ENCODE measurements at regions of chr11 and their contacts with region 1.

Region 1: DNA sequence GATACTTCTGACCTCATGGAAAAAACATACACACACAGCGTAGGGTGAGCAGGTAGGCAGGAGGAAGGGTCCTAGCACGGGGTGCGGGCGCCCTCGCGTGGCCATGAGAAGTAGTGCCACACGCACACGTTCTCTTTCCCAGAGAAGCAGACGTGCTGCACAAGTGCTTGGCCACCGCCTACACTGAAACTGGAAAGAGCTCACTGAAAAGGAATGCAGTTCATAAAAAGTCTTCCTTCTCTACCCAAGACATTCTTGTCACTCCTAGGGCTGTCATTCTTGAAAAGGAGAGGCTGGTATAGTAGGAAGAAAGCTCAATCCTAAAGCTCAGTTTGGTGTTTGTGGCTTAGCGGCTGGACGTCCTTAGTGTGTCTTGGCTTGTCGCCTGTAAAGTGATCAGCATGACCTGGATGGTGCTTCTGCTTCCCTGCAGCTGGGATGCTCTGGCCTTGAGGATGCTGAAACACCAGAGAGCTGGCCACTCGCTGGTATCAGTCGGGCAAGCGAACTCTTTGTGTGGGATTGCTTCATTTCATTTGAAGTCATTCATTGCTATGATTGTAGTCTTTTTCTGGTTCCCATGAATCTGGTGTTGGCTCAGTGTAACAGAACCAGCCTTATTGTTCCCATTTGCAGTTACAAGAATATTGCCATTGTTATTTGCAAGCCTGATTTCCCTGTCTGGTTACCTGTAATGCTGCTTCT is 303.8 kb downstream of the NTM start:
- DNase-seq: no peak
- ATAC-seq: peak; percentile 95
- H3K4me3 ChIP-seq: no peak overlapping the region
- H3K27ac ChIP-seq: no peak overlapping the region
- H3K4me1 ChIP-seq: no peaks in the 10 kb centered on the region
- H3K27me3 ChIP-seq: no peaks in the 10 kb centered on the region
- CTCF ChIP-seq: peak; percentile 96 to 97 (median 97)
- EP300 ChIP-seq: no peak
- POLR2A ChIP-seq: no peak
- RAD21 ChIP-seq: peak; percentile 91

Region 2: DNA sequence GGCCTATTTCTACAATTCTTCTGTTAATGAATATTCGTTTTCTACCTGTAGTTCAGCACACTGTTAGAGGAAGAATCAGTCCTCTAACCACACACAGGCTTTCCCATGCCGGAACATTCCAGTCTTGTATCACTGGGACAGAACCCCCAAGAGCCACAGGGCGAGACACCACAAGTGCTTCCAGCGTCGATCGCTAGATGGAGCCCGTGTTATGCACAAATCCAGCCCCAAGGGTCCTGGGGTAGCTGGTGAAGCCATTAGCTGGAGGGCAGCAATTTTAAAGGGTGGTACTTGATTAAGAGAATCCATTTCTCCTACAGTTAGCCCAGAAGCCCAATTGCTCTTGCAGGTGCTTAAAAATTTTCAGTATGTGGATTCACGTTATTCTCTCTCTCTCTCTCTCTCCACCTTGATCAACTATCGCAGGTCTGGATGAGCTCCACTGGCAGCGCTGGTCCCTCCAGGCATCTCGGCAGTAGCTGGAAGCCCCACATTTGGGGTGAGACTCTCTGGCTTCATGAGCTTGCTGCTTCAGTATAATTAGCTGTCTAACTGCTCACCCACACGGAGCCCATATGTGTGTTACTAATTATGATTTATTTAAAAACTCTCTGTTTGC is 609.7 kb before region 1 on chr11:
- CTCF ChIA-PET with region 1: interaction called, 25 read pairs
- POLR2A ChIA-PET with region 1: no interaction called
- RAD21 ChIA-PET with region 1: interaction called, 19 read pairs
- SMC1A ChIA-PET with region 1: interaction called, 6 read pairs
- in situ Hi-C with region 1: no loop called
- intact Hi-C with region 1: loop called (anchors 1 kb)
- DNase-seq: peak; percentile 5
- ATAC-seq: peak; percentile 94
- H3K4me3 ChIP-seq: no peak overlapping the region
- H3K27ac ChIP-seq: no peak overlapping the region
- H3K4me1 ChIP-seq: no peaks in the 10 kb centered on the region
- H3K27me3 ChIP-seq: peaks cover 0 to 6% of the 10 kb centered on the region in 2 experiments; a peak in 1 of 4 replicates
- CTCF ChIP-seq: peak; percentile 86 to 88 (median 87)
- EP300 ChIP-seq: no peak
- POLR2A ChIP-seq: no peak
- RAD21 ChIP-seq: peak; percentile 93

Region 3: GRCh38 chr11:131246663-131247062 is 427.5 kb before region 1 on chr11:
- CTCF ChIA-PET with region 1: interaction called, 5 read pairs
- POLR2A ChIA-PET with region 1: no interaction called
- RAD21 ChIA-PET with region 1: interaction called, 4 read pairs
- SMC1A ChIA-PET with region 1: no interaction called
- in situ Hi-C with region 1: no loop called
- intact Hi-C with region 1: loop called (anchors 10 kb)
- DNase-seq: no peak
- ATAC-seq: peak; percentile 66
- H3K4me3 ChIP-seq: no peak overlapping the region
- H3K27ac ChIP-seq: no peak overlapping the region
- H3K4me1 ChIP-seq: no peaks in the 10 kb centered on the region
- H3K27me3 ChIP-seq: no peaks in the 10 kb centered on the region; a peak in 2 of 4 replicates
- CTCF ChIP-seq: peak; percentile 42 to 59 (median 48); a peak in 5 of 6 replicates
- EP300 ChIP-seq: no peak
- POLR2A ChIP-seq: no peak
- RAD21 ChIP-seq: peak; percentile 33

Region 4: GRCh38 chr11:131579932-131580387 is 94.2 kb before region 1 on chr11:
- CTCF ChIA-PET with region 1: interaction called, 46 read pairs
- POLR2A ChIA-PET with region 1: no interaction called
- RAD21 ChIA-PET with region 1: interaction called, 12 read pairs
- SMC1A ChIA-PET with region 1: interaction called, 8 read pairs
- in situ Hi-C with region 1: loop called (anchors 5 kb)
- intact Hi-C with region 1: loop called (anchors 1 kb)
- DNase-seq: no peak
- ATAC-seq: peak; percentile 93
- H3K4me3 ChIP-seq: no peak overlapping the region
- H3K27ac ChIP-seq: no peak overlapping the region
- H3K4me1 ChIP-seq: no peaks in the 10 kb centered on the region
- H3K27me3 ChIP-seq: peaks cover 4 to 13% of the 10 kb centered on the region in 2 experiments; a peak in 3 of 4 replicates
- CTCF ChIP-seq: peak; percentile 53 to 62 (median 56)
- EP300 ChIP-seq: no peak
- POLR2A ChIP-seq: no peak
- RAD21 ChIP-seq: peak; percentile 56

Region 5: DNA sequence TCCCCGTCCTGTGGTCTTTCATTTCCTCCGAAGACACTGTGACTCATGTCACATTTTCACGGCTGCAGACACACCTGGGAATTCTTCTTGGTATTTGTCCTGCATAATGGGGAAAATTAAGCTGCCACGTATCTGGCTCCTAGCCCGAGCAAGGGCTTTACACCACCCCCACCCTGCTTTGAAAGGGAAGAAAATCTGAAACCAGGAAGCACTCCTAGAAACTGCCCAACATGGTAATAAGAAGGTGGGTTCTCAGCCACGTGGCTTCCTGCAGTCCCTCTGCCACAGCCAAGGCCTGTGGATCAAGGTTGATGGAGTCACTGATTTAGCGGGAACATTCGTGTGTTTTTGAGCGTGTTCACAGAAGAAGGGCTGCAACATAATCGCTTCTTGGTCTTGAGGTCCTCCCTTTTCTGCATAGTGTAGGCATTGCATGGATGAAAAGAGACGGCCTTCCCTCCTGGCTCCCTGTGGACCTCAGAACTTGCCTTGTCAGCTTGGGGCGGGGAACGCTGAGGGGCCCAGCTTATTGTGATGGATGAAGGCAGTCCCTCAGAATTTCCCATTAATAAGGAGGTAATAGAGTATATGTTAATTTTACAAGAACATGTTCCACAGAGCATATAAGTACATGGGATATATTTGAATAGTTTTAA is 11.8 kb before region 1 on chr11:
- CTCF ChIA-PET with region 1: interaction called, 17 read pairs
- POLR2A ChIA-PET with region 1: no interaction called
- RAD21 ChIA-PET with region 1: no interaction called
- SMC1A ChIA-PET with region 1: no interaction called
- in situ Hi-C with region 1: no loop called
- intact Hi-C with region 1: no loop called
- DNase-seq: no peak
- ATAC-seq: no peak
- H3K4me3 ChIP-seq: no peak overlapping the region
- H3K27ac ChIP-seq: no peak overlapping the region
- H3K4me1 ChIP-seq: peaks cover 8% of the 10 kb centered on the region; the same call in 1 of the 2 replicates
- H3K27me3 ChIP-seq: peaks cover 0 to 6% of the 10 kb centered on the region in 2 experiments; a peak in 1 of 4 replicates
- CTCF ChIP-seq: no peak
- EP300 ChIP-seq: no peak
- POLR2A ChIP-seq: no peak
- RAD21 ChIP-seq: no peak

Region 6: GRCh38 chr11:131723088-131723487 is 48.9 kb after region 1 on chr11:
- CTCF ChIA-PET with region 1: no interaction called
- POLR2A ChIA-PET with region 1: no interaction called
- RAD21 ChIA-PET with region 1: no interaction called
- SMC1A ChIA-PET with region 1: no interaction called
- in situ Hi-C with region 1: no loop called
- intact Hi-C with region 1: no loop called
- DNase-seq: no peak
- ATAC-seq: no peak
- H3K4me3 ChIP-seq: no peak overlapping the region
- H3K27ac ChIP-seq: no peak overlapping the region
- H3K4me1 ChIP-seq: no peaks in the 10 kb centered on the region
- H3K27me3 ChIP-seq: no peaks in the 10 kb centered on the region; a peak in 2 of 4 replicates
- CTCF ChIP-seq: no peak
- EP300 ChIP-seq: no peak
- POLR2A ChIP-seq: no peak
- RAD21 ChIP-seq: no peak

Region 7: GRCh38 chr11:131851964-131852755 is 178.0 kb after region 1 on chr11:
- CTCF ChIA-PET with region 1: no interaction called
- POLR2A ChIA-PET with region 1: no interaction called
- RAD21 ChIA-PET with region 1: no interaction called
- SMC1A ChIA-PET with region 1: no interaction called
- in situ Hi-C with region 1: no loop called
- intact Hi-C with region 1: no loop called
- DNase-seq: no peak
- ATAC-seq: no peak
- H3K4me3 ChIP-seq: no peak overlapping the region
- H3K27ac ChIP-seq: no peak overlapping the region
- H3K4me1 ChIP-seq: no peaks in the 10 kb centered on the region
- H3K27me3 ChIP-seq: no peaks in the 10 kb centered on the region; a peak in 1 of 4 replicates
- CTCF ChIP-seq: no peak
- EP300 ChIP-seq: no peak
- POLR2A ChIP-seq: no peak
- RAD21 ChIP-seq: no peak

Measured in GM12878 (cell line).